ENCODE measurements at regions of chr11 and their contacts with region 1.

Region 1: GRCh38 chr11:43419460-43419859 is 60.7 kb downstream of the TTC17 start:
- DNase-seq: no peak
- H3K4me3 ChIP-seq: no peak overlapping the region
- CTCF ChIP-seq: no peak
- POLR2A ChIP-seq: no peak

Region 2: GRCh38 chr11:43311791-43312607 is 107.5 kb before region 1 on chr11 and contains the start of gene API5:
- intact Hi-C with region 1: loop called (anchors 10 kb)
- DNase-seq: peak; percentile 89 to 98
- H3K4me3 ChIP-seq: peak within 1 kb of the TSS; percentile 95
- CTCF ChIP-seq: no peak
- POLR2A ChIP-seq: no peak
- total RNA-seq, gene API5: 55.0 to 73.3 (median 64.7) TPM

Measured in lower leg skin (tissue), 4 donors.